ENCODE measurements at regions of chr4 and their contacts with region 1.

Region 1: GRCh38 chr4:184156163-184156920 is 61.3 kb downstream of the ENPP6 start:
- DNase-seq: no peak
- ATAC-seq: peak in 7 of 8 donors; percentile 27 to 90 (median 56)
- H3K4me3 ChIP-seq: no peak overlapping the region
- H3K27ac ChIP-seq: peak overlapping the region in 5 of 10 donors; percentile 1 to 63 (median 32)
- H3K4me1 ChIP-seq: peaks cover 0 to 21% (median 13%) of the 10 kb centered on the region in 9 donors
- H3K27me3 ChIP-seq: peaks cover 0 to 8% (median 0%) of the 10 kb centered on the region in 7 donors
- CTCF ChIP-seq: no peak

Region 2: DNA sequence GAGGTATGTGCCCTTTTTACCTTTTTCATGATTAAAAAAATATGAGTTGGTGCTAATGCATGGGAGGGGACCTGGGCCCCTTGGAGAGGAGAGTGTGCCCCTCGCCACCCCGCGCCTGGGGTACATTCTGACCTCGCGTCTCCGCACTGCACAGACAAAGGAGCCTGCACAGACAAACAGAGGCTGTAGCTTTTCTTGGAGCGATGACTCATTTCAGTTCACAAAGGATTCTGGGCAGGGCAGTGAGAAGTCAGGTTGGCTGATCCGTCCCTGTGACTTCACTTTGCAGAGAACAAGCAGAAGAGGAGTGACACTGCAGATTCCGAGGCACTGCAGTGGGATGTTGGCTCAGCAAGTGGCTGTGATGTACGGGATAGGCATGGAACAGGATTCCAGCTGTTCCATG is 168.4 kb before region 1 on chr4:
- intact Hi-C with region 1: loop called in 1 of 10 experiments (anchors 10 kb)
- DNase-seq: peak; percentile 44 to 82
- ATAC-seq: peak; percentile 90 to 96 (median 93)
- H3K4me3 ChIP-seq: peak overlapping the region in 9 of 10 donors; percentile 19 to 60 (median 47)
- H3K27ac ChIP-seq: peak overlapping the region; percentile 74 to 93 (median 84)
- H3K4me1 ChIP-seq: peaks cover 0 to 47% (median 31%) of the 10 kb centered on the region in 9 donors
- H3K27me3 ChIP-seq: no peaks in the 10 kb centered on the region
- CTCF ChIP-seq: no peak

Region 3: DNA sequence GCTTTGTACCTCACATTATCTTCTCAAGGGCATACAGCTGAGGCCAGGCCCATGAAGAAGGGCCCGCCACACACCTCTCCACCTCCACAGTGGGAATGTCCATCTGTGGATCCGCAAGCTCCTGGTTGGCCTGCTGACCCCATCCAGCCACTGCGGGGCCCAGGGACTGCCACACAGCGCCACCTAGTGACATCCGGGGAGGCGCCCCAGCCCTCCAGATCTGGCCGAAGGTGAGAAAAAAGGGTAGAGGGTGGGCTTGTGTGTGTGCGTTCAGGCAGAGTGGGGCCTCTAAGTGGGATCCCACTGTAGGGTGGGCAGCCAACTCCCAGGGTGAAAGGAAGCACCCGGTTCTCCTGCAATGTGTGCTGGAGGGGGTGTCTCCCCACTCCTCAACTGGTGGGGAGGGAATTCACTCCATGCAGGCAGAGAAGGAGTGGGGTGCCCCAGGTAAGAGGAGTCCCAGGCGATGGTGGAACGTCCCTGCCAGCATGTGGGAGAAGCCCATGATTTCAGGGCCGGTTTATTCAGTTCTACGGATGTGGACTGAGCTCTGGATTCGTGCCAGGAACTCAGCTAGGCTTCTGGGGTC is 56.0 kb before region 1 on chr4:
- intact Hi-C with region 1: loop called in 3 of 10 experiments (anchors 5 to 10 kb)
- DNase-seq: peak; percentile 11 to 73
- ATAC-seq: peak; percentile 40 to 82 (median 67)
- H3K4me3 ChIP-seq: no peak overlapping the region
- H3K27ac ChIP-seq: no peak overlapping the region
- H3K4me1 ChIP-seq: peaks cover 0 to 44% (median 20%) of the 10 kb centered on the region in 9 donors
- H3K27me3 ChIP-seq: no peaks in the 10 kb centered on the region
- CTCF ChIP-seq: peak; percentile 62 to 78 (median 72)

Region 4: DNA sequence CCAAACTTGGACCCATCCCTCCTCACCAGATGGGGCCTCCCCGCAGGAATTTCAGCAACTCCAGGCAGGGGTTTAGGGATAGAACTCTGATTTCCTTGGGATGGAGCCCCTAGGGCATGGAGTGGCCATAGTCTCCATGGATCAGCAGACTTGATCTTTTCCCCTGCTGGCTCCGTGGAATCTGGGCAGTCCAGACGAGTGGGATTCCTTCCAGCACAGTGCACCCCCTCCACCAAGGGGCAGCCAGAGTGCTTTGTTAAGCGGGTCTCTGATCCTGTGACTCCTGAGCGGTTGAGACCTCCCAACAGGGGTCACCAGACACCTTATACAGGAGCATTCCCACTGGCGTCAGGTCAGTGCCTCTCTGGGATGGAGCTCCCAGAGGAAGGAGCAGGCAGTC is 20.9 kb after region 1 on chr4:
- intact Hi-C with region 1: loop called in 1 of 10 experiments (anchors 2 kb)
- DNase-seq: no peak
- ATAC-seq: no peak
- H3K4me3 ChIP-seq: no peak overlapping the region
- H3K27ac ChIP-seq: no peak overlapping the region
- H3K4me1 ChIP-seq: no peaks in the 10 kb centered on the region
- H3K27me3 ChIP-seq: peaks cover 0 to 7% (median 0%) of the 10 kb centered on the region in 7 donors
- CTCF ChIP-seq: no peak

Measured in heart right ventricle (tissue), 16 donors.